CD14-positive monocyte (primary cell): ENCODE measurements at regions of chr15 and their contacts with region 1.

Region 1: GRCh38 chr15:43105778-43106485 is at the start of gene UBR1:
- DNase-seq: peak; percentile 82 to 88 (median 86)
- H3K4me3 ChIP-seq: peak within 1 kb of the TSS; percentile 79 to 94 (median 82)
- H3K4me3 Mint-ChIP-seq: peak within 1 kb of the TSS; percentile 98
- H3K27ac ChIP-seq: peak within 1 kb of the TSS; percentile 80 to 96
- H3K27ac Mint-ChIP-seq: peak within 1 kb of the TSS; percentile 96 to 99 (median 99)
- H3K4me1 ChIP-seq: peaks cover 35 to 46% of the 10 kb centered on the region in 2 donors
- H3K4me1 Mint-ChIP-seq: peaks cover 41% of the 10 kb centered on the region
- H3K27me3 ChIP-seq: no peaks in the 10 kb centered on the region
- H3K27me3 Mint-ChIP-seq: no peaks in the 10 kb centered on the region
- CTCF ChIP-seq: no peak
- polyA plus RNA-seq, gene UBR1: 5.1 to 7.9 (median 6.3) TPM

Region 2: DNA sequence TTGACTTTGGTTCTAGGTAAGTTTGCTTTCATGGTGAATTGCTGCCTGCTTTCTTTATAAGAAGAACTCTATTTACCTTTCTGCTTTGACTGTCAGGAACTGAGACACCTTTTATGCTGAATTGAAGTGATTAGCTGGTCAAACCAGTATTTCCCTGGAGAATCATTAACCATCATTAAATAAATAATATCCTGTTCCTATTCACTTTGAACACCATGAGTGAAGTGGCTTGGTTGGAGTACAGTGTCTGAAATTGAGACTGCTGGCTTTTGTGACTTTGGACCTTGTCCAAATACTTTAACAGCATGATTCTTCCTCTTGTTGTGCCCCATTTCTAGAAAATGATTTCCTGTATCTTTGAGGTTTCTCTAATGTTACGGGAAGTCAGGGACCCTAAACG is 21.8 kb after region 1 on chr15:
- intact Hi-C with region 1: loop called in 1 of 2 experiments (anchors 2 kb)
- DNase-seq: peak in 1 of 3 donors; percentile 23
- H3K4me3 ChIP-seq: peak overlapping the region in 1 of 3 experiments; percentile 34
- H3K4me3 Mint-ChIP-seq: peak overlapping the region; percentile 28 to 45
- H3K27ac ChIP-seq: no peak overlapping the region
- H3K27ac Mint-ChIP-seq: peak overlapping the region; percentile 40 to 91 (median 76)
- H3K4me1 ChIP-seq: peaks cover 34 to 45% of the 10 kb centered on the region in 2 donors
- H3K4me1 Mint-ChIP-seq: peaks cover 43% of the 10 kb centered on the region
- H3K27me3 ChIP-seq: no peaks in the 10 kb centered on the region
- H3K27me3 Mint-ChIP-seq: peaks cover 0 to 4% (median 0%) of the 10 kb centered on the region in 3 donors
- CTCF ChIP-seq: no peak

Region 3: GRCh38 chr15:43146187-43146586 is 40.3 kb after region 1 on chr15:
- intact Hi-C with region 1: loop called in 1 of 2 experiments (anchors 5 kb)
- DNase-seq: no peak
- H3K4me3 ChIP-seq: no peak overlapping the region
- H3K4me3 Mint-ChIP-seq: no peak overlapping the region
- H3K27ac ChIP-seq: no peak overlapping the region
- H3K27ac Mint-ChIP-seq: no peak overlapping the region
- H3K4me1 ChIP-seq: peaks cover 13 to 18% of the 10 kb centered on the region in 2 donors
- H3K4me1 Mint-ChIP-seq: peaks cover 14% of the 10 kb centered on the region
- H3K27me3 ChIP-seq: no peaks in the 10 kb centered on the region
- H3K27me3 Mint-ChIP-seq: no peaks in the 10 kb centered on the region
- CTCF ChIP-seq: no peak

Region 4: GRCh38 chr15:43185157-43186017 is 79.5 kb after region 1 on chr15 and contains the start of gene CCNDBP1:
- intact Hi-C with region 1: loop called in 1 of 2 experiments (anchors 5 kb)
- DNase-seq: peak; percentile 78 to 84 (median 82)
- H3K4me3 ChIP-seq: peak within 1 kb of the TSS; percentile 66 to 98 (median 97)
- H3K4me3 Mint-ChIP-seq: peak within 1 kb of the TSS; percentile 96 to 98
- H3K27ac ChIP-seq: peak within 1 kb of the TSS; percentile 79 to 89
- H3K27ac Mint-ChIP-seq: peak within 1 kb of the TSS; percentile 92 to 96 (median 95)
- H3K4me1 ChIP-seq: peaks cover 8 to 19% of the 10 kb centered on the region in 2 donors
- H3K4me1 Mint-ChIP-seq: peaks cover 20% of the 10 kb centered on the region
- H3K27me3 ChIP-seq: no peaks in the 10 kb centered on the region
- H3K27me3 Mint-ChIP-seq: no peaks in the 10 kb centered on the region
- CTCF ChIP-seq: peak; percentile 62
- polyA plus RNA-seq, gene CCNDBP1: 79.2 to 205 (median 196) TPM